ENCODE measurements at regions of chr2 and their contacts with region 1.

Region 1: DNA sequence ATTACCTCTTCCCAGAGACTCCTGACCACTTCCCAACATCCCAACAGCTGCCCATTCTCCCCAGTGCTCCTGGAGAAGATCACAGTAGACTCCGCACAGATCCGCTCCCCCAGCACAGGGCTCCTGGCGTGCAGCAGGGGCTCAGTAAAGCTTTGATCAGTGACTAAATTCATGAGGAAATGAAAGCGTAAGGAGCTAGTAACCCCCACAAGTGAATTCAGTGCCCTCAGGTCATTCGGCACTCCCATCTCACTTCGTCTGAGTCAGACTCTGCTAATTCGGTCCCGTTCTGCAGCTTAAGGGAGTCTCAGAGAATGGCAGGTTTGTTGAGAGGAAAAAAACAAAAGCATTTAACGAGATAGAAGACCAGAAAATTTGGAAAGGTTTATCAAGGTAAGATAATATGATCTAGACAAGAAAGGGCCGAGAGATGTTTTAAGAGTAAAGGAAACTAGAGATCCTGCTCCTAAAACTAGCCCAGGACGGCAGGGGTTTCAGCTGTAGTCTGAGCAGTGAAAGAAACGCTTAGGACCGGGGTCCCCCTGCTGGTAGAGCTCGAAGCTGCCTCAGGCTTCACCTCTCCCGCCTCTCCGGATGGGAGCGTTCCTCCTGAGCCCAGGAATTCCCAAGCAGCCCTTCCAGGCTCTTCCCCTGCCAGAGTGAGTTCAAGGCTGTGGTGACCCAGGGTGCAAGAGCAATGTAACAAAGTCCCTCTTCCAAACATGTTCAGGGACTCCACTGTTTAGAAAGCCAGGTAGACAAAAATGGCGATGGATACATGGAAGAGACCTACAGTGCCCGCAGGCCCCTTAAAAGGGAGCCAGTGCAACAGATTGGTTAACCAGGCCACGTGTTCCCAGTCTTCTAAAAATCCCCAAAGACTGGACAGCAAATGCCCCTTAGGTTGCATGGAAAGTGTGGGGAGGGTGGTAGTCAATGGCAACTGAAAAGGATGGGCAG is 127.3 kb downstream of the DNER start:
- DNase-seq: peak; percentile 89
- H3K4me3 Mint-ChIP-seq: peak overlapping the region; percentile 57
- H3K27ac Mint-ChIP-seq: peak overlapping the region; percentile 55
- H3K4me1 Mint-ChIP-seq: peaks cover 15% of the 10 kb centered on the region
- H3K27me3 Mint-ChIP-seq: no peaks in the 10 kb centered on the region
- CTCF ChIP-seq: peak; percentile 97

Region 2: DNA sequence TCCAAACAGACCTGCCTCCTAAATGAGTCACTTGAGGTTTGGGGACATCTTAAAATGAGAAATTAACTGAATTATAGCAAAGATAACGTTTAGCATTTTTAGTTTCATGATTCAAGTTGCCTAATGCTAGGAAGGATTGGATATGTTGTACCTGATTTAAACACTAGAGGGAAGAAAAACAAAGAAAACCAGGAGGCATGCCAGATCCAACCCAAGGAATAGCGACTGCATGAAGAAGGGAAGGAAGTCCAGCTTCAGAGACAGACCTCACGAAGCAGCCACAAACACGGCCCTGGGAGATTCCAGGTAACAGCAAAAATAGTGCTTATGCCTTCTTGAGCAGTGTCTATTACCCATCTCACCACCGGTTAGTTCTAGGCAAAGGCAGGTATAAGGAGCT is 905.6 kb before region 1 on chr2:
- CTCF ChIA-PET with region 1: no interaction called
- intact Hi-C with region 1: loop called (anchors 10 kb)
- DNase-seq: no peak
- H3K4me3 Mint-ChIP-seq: no peak overlapping the region
- H3K27ac Mint-ChIP-seq: no peak overlapping the region
- H3K4me1 Mint-ChIP-seq: no peaks in the 10 kb centered on the region
- H3K27me3 Mint-ChIP-seq: no peaks in the 10 kb centered on the region
- CTCF ChIP-seq: peak; percentile 26

Region 3: DNA sequence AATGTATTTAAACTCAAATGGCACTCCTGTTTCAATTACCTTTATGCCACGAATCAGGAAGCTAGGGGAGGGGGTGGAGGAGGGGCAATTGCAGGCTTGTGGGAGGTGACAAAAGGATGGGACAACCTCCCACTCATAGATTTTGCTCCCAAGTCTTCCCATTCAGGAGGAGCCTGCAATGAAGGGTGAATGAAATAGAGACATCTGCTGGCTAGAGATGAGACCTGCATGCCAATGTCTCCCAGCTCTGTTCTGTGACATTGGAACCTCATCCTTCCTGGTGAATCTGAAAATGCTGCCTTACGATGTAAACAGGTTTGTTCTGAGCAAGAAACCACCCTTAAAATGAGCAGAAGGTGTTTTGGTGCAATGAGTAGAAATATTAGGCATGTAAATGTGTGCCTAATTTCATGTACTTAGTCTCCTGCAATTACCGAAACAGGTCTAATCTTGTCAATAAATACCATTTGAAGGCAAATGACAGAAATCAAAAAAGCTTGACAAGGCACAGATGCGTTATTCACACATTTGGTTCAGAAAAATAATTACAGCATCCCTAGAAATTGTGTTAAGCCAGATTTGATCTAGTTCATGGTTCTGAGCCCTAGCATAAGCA is 313.2 kb before region 1 on chr2:
- CTCF ChIA-PET with region 1: interaction called, 4 read pairs
- intact Hi-C with region 1: loop called (anchors 5 kb)
- DNase-seq: peak; percentile 60
- H3K4me3 Mint-ChIP-seq: peak overlapping the region; percentile 34
- H3K27ac Mint-ChIP-seq: no peak overlapping the region
- H3K4me1 Mint-ChIP-seq: peaks cover 22% of the 10 kb centered on the region
- H3K27me3 Mint-ChIP-seq: peaks cover 41% of the 10 kb centered on the region
- CTCF ChIP-seq: peak; percentile 68

Region 4: GRCh38 chr2:229431327-229431954 is 155.6 kb before region 1 on chr2:
- CTCF ChIA-PET with region 1: interaction called, 26 read pairs
- intact Hi-C with region 1: loop called (anchors 1 kb)
- DNase-seq: no peak
- H3K4me3 Mint-ChIP-seq: no peak overlapping the region
- H3K27ac Mint-ChIP-seq: no peak overlapping the region
- H3K4me1 Mint-ChIP-seq: peaks cover 5% of the 10 kb centered on the region
- H3K27me3 Mint-ChIP-seq: no peaks in the 10 kb centered on the region
- CTCF ChIP-seq: peak; percentile 19

Region 5: GRCh38 chr2:229714736-229715541 is 127.9 kb after region 1 on chr2:
- CTCF ChIA-PET with region 1: interaction called, 4 read pairs
- intact Hi-C with region 1: loop called (anchors 1 kb)
- DNase-seq: peak; percentile 63
- H3K4me3 Mint-ChIP-seq: peak overlapping the region; percentile 70
- H3K27ac Mint-ChIP-seq: no peak overlapping the region
- H3K4me1 Mint-ChIP-seq: no peaks in the 10 kb centered on the region
- H3K27me3 Mint-ChIP-seq: peaks cover 67% of the 10 kb centered on the region
- CTCF ChIP-seq: no peak